Breast epithelium (tissue), 4 donors: ENCODE measurements at regions of chr4 and their contacts with region 1.

Region 1: DNA sequence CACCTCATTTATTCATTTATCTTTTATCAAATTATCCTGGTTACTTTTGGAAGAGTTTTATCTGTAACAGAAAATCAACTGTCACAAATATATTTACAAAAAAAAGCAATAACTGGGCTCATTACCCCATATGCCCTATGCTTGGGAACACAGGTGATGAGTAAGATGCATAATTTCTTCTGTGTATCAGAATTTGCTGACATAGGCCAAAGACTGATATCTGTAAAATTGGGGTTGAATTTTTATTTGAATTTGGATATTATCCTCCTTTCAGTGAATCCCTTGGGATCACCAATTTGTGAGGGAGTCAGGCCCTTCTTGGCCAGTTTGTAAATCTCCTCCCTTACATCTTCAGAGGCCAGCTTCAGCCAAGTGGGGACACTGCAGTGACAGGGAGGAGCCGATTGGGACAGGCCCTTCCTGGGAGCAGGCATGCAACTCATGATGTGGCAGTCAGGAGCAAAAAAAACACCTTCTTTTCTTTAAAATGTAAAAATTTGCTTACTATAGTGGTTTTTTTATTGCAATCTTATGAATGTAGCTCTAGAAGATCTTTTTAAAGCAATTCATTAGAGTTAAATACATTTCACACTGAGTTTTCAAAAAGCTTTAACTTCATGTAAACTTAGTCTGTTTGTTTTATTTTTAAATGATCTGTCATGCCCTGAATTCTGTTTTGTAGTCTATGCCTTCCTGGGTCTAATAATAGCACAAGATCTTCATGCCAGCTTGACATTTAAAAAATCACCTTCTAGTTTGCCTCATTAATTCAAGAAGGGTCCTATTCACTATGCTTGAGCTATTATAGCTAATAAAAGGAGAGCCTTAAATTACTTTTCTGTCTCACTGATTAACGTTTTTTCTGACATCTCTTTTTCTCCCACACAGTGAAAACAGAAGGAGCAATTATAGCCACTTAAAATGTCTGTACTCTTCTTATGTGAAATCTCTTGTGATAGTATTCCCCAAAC is 136.6 kb upstream of the SPRY1 start:
- DNase-seq: no peak
- H3K4me3 ChIP-seq: no peak overlapping the region
- H3K27ac ChIP-seq: no peak overlapping the region
- H3K4me1 ChIP-seq: no peaks in the 10 kb centered on the region
- H3K27me3 ChIP-seq: no peaks in the 10 kb centered on the region
- CTCF ChIP-seq: no peak
- POLR2A ChIP-seq: no peak

Region 2: GRCh38 chr4:122542411-122543236 is 717.3 kb before region 1 on chr4:
- intact Hi-C with region 1: loop called (anchors 5 kb)
- DNase-seq: no peak
- H3K4me3 ChIP-seq: no peak overlapping the region
- H3K27ac ChIP-seq: no peak overlapping the region
- H3K4me1 ChIP-seq: no peaks in the 10 kb centered on the region
- H3K27me3 ChIP-seq: no peaks in the 10 kb centered on the region
- CTCF ChIP-seq: no peak
- POLR2A ChIP-seq: no peak

Region 3: GRCh38 chr4:122602277-122603142 is 657.5 kb before region 1 on chr4:
- intact Hi-C with region 1: no loop called
- DNase-seq: no peak
- H3K4me3 ChIP-seq: no peak overlapping the region
- H3K27ac ChIP-seq: no peak overlapping the region
- H3K4me1 ChIP-seq: no peaks in the 10 kb centered on the region
- H3K27me3 ChIP-seq: no peaks in the 10 kb centered on the region
- CTCF ChIP-seq: peak in 1 of 3 donors; percentile 17
- POLR2A ChIP-seq: no peak

Region 4: DNA sequence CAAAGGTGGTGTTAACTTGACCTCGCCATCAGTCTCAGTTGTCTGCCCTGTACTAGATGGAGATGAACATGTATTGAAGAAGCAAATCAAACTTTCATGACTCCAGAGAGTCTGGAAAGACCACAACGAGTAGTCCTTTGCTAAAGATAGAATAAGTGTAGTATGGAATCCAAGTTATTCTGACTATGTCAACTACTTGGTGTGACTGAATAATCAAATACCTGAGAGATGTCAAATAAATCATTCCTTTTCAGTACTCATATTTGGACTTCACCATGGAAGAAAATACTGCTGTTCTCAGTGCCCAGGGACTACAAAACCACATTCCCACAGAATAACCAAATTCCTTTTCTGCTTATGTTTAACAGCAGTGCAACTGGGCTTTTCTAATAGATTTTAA is 24.5 kb before region 1 on chr4:
- intact Hi-C with region 1: no loop called
- DNase-seq: no peak
- H3K4me3 ChIP-seq: no peak overlapping the region
- H3K27ac ChIP-seq: no peak overlapping the region
- H3K4me1 ChIP-seq: no peaks in the 10 kb centered on the region
- H3K27me3 ChIP-seq: no peaks in the 10 kb centered on the region
- CTCF ChIP-seq: no peak
- POLR2A ChIP-seq: no peak